Heart right ventricle (tissue), 16 donors: ENCODE measurements at regions of chr11 and their contacts with region 1.

Region 1: GRCh38 chr11:122781378-122782195 is 56.7 kb upstream of the CRTAM start:
- DNase-seq: peak; percentile 87 to 92
- ATAC-seq: peak; percentile 93 to 98 (median 96)
- H3K4me3 ChIP-seq: no peak overlapping the region
- H3K27ac ChIP-seq: no peak overlapping the region
- H3K4me1 ChIP-seq: peaks cover 0 to 47% (median 19%) of the 10 kb centered on the region in 9 donors
- H3K27me3 ChIP-seq: peaks cover 0 to 8% (median 0%) of the 10 kb centered on the region in 7 donors
- CTCF ChIP-seq: peak; percentile 86 to 97 (median 94)

Region 2: GRCh38 chr11:122578168-122578825 is 203.3 kb before region 1 on chr11:
- intact Hi-C with region 1: loop called in 7 of 10 experiments (anchors 1 to 5 kb)
- DNase-seq: no peak
- ATAC-seq: no peak
- H3K4me3 ChIP-seq: no peak overlapping the region
- H3K27ac ChIP-seq: no peak overlapping the region
- H3K4me1 ChIP-seq: peaks cover 0 to 11% (median 0%) of the 10 kb centered on the region in 9 donors
- H3K27me3 ChIP-seq: no peaks in the 10 kb centered on the region
- CTCF ChIP-seq: no peak

Region 3: GRCh38 chr11:122584670-122585069 is 196.9 kb before region 1 on chr11:
- intact Hi-C with region 1: loop called in 7 of 10 experiments (anchors 1 to 5 kb)
- DNase-seq: no peak
- ATAC-seq: no peak
- H3K4me3 ChIP-seq: no peak overlapping the region
- H3K27ac ChIP-seq: no peak overlapping the region
- H3K4me1 ChIP-seq: peaks cover 0 to 11% (median 0%) of the 10 kb centered on the region in 9 donors
- H3K27me3 ChIP-seq: peaks cover 0 to 9% (median 0%) of the 10 kb centered on the region in 7 donors
- CTCF ChIP-seq: no peak

Region 4: GRCh38 chr11:122628810-122629555 is 152.6 kb before region 1 on chr11:
- intact Hi-C with region 1: loop called (anchors 1 to 5 kb)
- DNase-seq: peak; percentile 48 to 57
- ATAC-seq: peak in 7 of 8 donors; percentile 58 to 79 (median 67)
- H3K4me3 ChIP-seq: no peak overlapping the region
- H3K27ac ChIP-seq: no peak overlapping the region
- H3K4me1 ChIP-seq: peaks cover 0 to 7% (median 0%) of the 10 kb centered on the region in 9 donors
- H3K27me3 ChIP-seq: peaks cover 0 to 40% (median 20%) of the 10 kb centered on the region in 7 donors
- CTCF ChIP-seq: peak; percentile 44 to 79 (median 74)

Region 5: DNA sequence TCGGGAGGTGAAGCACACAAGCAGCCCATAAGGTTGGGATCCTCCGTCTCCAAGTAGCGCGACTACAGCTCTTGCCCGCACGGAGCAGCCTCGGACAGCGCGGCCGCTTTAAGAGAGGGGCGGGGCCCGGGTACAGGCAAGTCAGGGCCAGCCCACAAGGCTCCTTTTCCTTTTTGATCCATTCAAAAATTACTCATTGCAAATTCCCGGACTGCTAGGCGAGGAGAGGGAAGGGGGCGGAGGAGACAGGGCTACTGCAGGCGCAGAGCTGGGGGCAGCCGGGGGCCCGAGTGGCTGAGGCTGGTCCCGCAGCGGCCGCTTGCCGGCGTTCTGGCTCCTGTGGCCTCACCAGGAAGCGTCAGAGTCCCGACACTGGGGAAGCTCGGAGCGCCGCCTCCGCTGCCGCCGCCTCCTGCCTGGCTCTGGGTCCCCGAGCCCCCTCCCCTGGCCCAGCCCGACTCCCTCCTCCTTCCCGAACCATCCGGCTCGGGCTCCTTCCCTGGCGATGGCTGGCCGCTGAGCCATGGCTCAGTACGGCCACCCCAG is 126.0 kb before region 1 on chr11 and contains the start of gene UBASH3B:
- intact Hi-C with region 1: loop called in 3 of 10 experiments (anchors 1 to 5 kb)
- DNase-seq: peak; percentile 70 to 79
- ATAC-seq: peak; percentile 84 to 93 (median 91)
- H3K4me3 ChIP-seq: peak within 1 kb of the TSS; percentile 61 to 96 (median 78)
- H3K27ac ChIP-seq: peak within 1 kb of the TSS; percentile 34 to 97 (median 87)
- H3K4me1 ChIP-seq: peaks cover 4 to 55% (median 15%) of the 10 kb centered on the region in 9 donors
- H3K27me3 ChIP-seq: peaks cover 0 to 19% (median 10%) of the 10 kb centered on the region in 7 donors
- CTCF ChIP-seq: peak in 4 of 9 donors; percentile 7 to 39 (median 24)
- total RNA-seq, gene UBASH3B: 0.66 to 8.0 (median 1.6) TPM

Region 6: GRCh38 chr11:123039605-123040432 is 258.2 kb after region 1 on chr11:
- intact Hi-C with region 1: loop called in 1 of 10 experiments (anchors 10 kb)
- DNase-seq: peak in 1 of 2 donors; percentile 19
- ATAC-seq: peak in 5 of 8 donors; percentile 39 to 70 (median 45)
- H3K4me3 ChIP-seq: no peak overlapping the region
- H3K27ac ChIP-seq: no peak overlapping the region
- H3K4me1 ChIP-seq: no peaks in the 10 kb centered on the region
- H3K27me3 ChIP-seq: peaks cover 0 to 4% (median 0%) of the 10 kb centered on the region in 7 donors
- CTCF ChIP-seq: no peak